B cell (primary cell): ENCODE measurements at regions of chr15 and their contacts with region 1.

Region 1: DNA sequence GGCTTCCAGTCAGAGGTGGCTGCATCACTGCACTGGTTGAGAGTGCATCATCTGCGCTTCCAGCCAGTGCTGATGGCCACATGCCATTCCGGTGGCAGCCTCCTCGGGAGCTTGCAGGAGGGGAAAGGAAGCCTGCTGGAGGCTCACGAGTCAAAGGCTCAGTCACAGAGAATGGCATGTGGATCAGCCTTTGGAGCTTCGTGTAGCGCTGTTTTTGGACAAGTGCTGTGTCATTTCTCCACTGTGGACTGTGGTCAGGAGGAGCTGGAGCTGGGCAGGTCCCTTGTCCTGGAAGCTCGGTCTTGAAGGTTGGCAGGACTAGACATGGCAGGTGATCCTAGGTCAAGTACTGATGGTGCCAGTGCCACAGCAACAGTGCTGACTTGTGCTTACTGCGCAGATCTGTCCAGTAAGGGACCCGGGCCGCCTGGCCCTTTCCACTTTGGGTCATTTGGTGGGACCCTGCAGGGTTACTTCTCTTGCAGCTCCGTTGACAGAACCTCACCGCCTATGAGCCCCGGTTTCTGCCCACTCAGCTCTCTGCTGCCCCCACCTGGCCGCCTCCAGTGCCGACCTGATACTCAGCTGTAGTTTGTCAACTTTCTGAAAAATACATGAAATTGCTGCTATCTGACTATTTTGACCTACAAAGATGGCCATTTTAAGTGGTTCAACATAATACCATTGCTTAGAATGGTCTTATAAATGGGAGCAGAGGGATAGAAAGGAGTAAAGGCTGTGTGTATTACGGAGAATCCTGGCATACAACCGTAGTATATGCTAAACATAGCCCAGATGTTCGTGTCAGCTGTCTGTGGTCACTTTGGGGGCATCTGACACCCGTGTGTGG is 27.6 kb upstream of the TRPM1 start:
- DNase-seq: peak; percentile 85
- ATAC-seq: peak; percentile 89
- H3K4me3 ChIP-seq: peak overlapping the region in 1 of 5 experiments; percentile 15
- H3K4me3 Mint-ChIP-seq: peak overlapping the region; percentile 0
- H3K27ac ChIP-seq: no peak overlapping the region
- H3K27ac Mint-ChIP-seq: peak overlapping the region; percentile 4
- H3K4me1 ChIP-seq: peaks cover 11 to 13% of the 10 kb centered on the region in 2 donors
- H3K4me1 Mint-ChIP-seq: peaks cover 13% of the 10 kb centered on the region
- H3K27me3 ChIP-seq: no peaks in the 10 kb centered on the region
- H3K27me3 Mint-ChIP-seq: no peaks in the 10 kb centered on the region
- CTCF ChIP-seq: peak; percentile 94

Region 2: GRCh38 chr15:30889196-30889595 is 239.9 kb before region 1 on chr15:
- CTCF ChIA-PET with region 1: interaction called, 49 read pairs
- POLR2A ChIA-PET with region 1: no interaction called
- intact Hi-C with region 1: loop called (anchors 1 kb)
- DNase-seq: no peak
- ATAC-seq: no peak
- H3K4me3 ChIP-seq: no peak overlapping the region
- H3K4me3 Mint-ChIP-seq: no peak overlapping the region
- H3K27ac ChIP-seq: no peak overlapping the region
- H3K27ac Mint-ChIP-seq: no peak overlapping the region
- H3K4me1 ChIP-seq: no peaks in the 10 kb centered on the region
- H3K4me1 Mint-ChIP-seq: peaks cover under 1% of the 10 kb centered on the region
- H3K27me3 ChIP-seq: no peaks in the 10 kb centered on the region
- H3K27me3 Mint-ChIP-seq: peaks cover 3% of the 10 kb centered on the region
- CTCF ChIP-seq: no peak

Region 3: GRCh38 chr15:30933293-30933692 is 195.9 kb before region 1 on chr15:
- CTCF ChIA-PET with region 1: interaction called, 29 read pairs
- POLR2A ChIA-PET with region 1: no interaction called
- intact Hi-C with region 1: no loop called
- DNase-seq: no peak
- ATAC-seq: no peak
- H3K4me3 ChIP-seq: no peak overlapping the region
- H3K4me3 Mint-ChIP-seq: no peak overlapping the region
- H3K27ac ChIP-seq: no peak overlapping the region
- H3K27ac Mint-ChIP-seq: no peak overlapping the region
- H3K4me1 ChIP-seq: peaks cover 0 to 5% of the 10 kb centered on the region in 2 donors
- H3K4me1 Mint-ChIP-seq: peaks cover 17% of the 10 kb centered on the region
- H3K27me3 ChIP-seq: no peaks in the 10 kb centered on the region
- H3K27me3 Mint-ChIP-seq: no peaks in the 10 kb centered on the region
- CTCF ChIP-seq: no peak

Region 4: DNA sequence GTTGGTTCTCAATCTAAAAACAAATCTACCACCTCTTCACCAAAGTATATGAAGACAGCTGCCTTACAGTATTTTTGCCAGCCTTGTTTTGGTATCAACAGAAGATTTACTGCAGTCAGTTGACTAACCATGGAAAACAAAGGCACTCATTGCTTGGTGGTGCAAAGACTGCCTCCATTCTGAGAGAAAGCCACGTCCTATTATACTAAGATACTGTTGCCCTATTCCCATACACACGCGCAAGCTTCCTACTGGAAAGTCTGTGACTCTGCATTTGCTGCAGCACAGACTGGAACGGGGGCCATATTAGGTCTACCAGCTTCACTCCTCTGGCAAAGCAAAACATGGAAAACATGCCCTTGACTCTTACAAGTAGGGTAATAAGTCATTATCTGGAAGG is 155.8 kb before region 1 on chr15:
- CTCF ChIA-PET with region 1: interaction called, 73 read pairs
- POLR2A ChIA-PET with region 1: no interaction called
- intact Hi-C with region 1: loop called (anchors 5 kb)
- DNase-seq: no peak
- ATAC-seq: no peak
- H3K4me3 ChIP-seq: no peak overlapping the region
- H3K4me3 Mint-ChIP-seq: no peak overlapping the region
- H3K27ac ChIP-seq: no peak overlapping the region
- H3K27ac Mint-ChIP-seq: no peak overlapping the region
- H3K4me1 ChIP-seq: peaks cover 17 to 33% of the 10 kb centered on the region in 2 donors
- H3K4me1 Mint-ChIP-seq: peaks cover 64% of the 10 kb centered on the region
- H3K27me3 ChIP-seq: no peaks in the 10 kb centered on the region
- H3K27me3 Mint-ChIP-seq: no peaks in the 10 kb centered on the region
- CTCF ChIP-seq: no peak

Region 5: DNA sequence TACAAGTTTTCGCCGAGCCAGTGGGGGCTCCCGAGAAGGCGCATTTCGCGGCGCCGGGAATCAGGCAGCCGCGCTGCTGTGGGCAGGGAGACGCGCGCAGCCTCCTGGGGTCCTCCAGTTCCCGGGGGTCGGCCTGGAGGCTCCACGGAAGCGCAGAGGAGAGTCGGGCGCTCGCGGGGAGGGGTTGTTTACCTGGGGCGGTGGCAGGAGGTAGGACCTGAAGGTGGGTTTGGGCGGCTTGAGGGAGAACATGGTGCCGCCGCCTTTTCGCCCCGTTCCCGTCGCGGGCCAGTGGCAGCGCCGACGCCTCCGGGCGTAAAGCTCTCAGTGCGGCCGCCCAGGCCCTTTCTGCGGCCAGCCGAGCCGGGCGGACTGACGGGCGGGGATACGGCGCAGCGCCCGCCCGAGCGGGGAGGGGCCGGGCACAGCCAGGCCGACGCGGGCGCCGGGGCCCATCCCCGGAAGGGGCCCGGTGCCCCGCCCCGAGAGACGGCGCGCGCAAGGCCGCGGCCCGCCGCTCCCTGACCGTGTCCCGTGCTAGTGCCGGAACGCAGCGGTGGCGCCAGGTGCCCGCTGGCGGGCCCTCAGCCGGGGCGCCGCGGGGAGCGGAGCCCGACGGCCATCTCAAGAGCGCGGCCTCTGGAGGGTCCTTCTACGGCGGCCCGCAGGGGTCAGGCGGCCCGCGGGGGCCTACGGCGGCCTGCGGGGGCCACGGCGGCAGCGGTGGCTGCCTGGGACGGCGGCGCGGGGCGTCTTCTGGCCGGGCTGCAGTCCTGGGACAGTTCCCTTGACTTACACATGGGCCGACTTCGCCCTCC is 137.7 kb before region 1 on chr15 and contains the start of gene MTMR10:
- CTCF ChIA-PET with region 1: interaction called, 12 read pairs
- POLR2A ChIA-PET with region 1: no interaction called
- intact Hi-C with region 1: loop called (anchors 1 kb)
- DNase-seq: peak; percentile 90
- ATAC-seq: peak; percentile 92
- H3K4me3 ChIP-seq: peak within 1 kb of the TSS; percentile 77 to 96 (median 85)
- H3K4me3 Mint-ChIP-seq: peak within 1 kb of the TSS; percentile 95
- H3K27ac ChIP-seq: peak within 1 kb of the TSS; percentile 81 to 94
- H3K27ac Mint-ChIP-seq: peak within 1 kb of the TSS; percentile 97
- H3K4me1 ChIP-seq: peaks cover 21 to 31% of the 10 kb centered on the region in 2 donors
- H3K4me1 Mint-ChIP-seq: peaks cover 31% of the 10 kb centered on the region
- H3K27me3 ChIP-seq: no peaks in the 10 kb centered on the region
- H3K27me3 Mint-ChIP-seq: no peaks in the 10 kb centered on the region
- CTCF ChIP-seq: no peak
- total RNA-seq, gene MTMR10: 50.2 and 53.2 TPM in 2 replicates

Region 6: DNA sequence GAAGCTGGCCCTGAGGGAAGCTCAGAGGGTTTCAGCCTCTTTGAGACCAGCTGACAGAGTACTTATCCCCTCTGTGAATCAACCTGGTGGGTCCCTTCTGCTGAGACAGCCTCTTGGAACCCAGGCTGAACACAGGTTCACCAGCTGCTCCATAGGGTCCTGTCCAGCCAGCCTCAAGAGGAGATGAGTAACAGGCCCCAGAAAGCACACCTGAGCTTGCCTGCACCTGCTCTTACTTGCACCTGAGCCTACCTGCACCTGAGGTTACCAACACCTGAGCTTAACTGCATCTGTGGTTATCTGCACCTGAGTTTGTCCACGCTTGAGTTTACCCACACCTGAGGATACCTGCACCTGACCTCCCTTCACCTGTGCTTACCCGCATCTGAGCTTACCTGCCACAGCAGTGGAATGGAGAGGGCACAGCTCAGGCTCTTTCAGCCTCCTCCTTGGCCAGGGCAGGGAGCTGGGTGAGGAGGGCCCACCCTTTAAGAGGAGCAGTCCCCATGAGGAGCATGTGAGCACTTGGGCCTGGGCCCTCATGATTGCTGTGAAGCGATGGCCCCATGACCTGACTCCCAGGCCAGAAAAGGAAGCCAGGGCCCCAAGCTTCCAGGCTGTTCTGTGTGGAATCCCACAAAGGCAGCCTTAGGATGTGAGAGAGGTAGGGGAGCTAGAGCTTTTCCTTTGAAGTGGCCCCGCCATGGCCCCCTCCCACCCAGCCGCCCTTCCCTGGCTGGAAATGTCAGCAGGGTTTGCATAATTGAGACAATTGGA is 27.7 kb before region 1 on chr15 and contains the start of gene TRPM1:
- CTCF ChIA-PET with region 1: interaction called, 11 read pairs
- POLR2A ChIA-PET with region 1: interaction called, 12 read pairs
- intact Hi-C with region 1: no loop called
- DNase-seq: no peak
- ATAC-seq: no peak
- H3K4me3 ChIP-seq: no peak within 1 kb of the TSS
- H3K4me3 Mint-ChIP-seq: peak within 1 kb of the TSS; percentile 3
- H3K27ac ChIP-seq: no peak within 1 kb of the TSS
- H3K27ac Mint-ChIP-seq: peak within 1 kb of the TSS; percentile 37
- H3K4me1 ChIP-seq: peaks cover 16 to 28% of the 10 kb centered on the region in 2 donors
- H3K4me1 Mint-ChIP-seq: peaks cover 35% of the 10 kb centered on the region
- H3K27me3 ChIP-seq: no peaks in the 10 kb centered on the region
- H3K27me3 Mint-ChIP-seq: no peaks in the 10 kb centered on the region
- CTCF ChIP-seq: no peak
- total RNA-seq, gene TRPM1: not detected in 2 replicates